HAP-1 (cell line): ENCODE measurements at regions of chr14 and their contacts with region 1.

Region 1: DNA sequence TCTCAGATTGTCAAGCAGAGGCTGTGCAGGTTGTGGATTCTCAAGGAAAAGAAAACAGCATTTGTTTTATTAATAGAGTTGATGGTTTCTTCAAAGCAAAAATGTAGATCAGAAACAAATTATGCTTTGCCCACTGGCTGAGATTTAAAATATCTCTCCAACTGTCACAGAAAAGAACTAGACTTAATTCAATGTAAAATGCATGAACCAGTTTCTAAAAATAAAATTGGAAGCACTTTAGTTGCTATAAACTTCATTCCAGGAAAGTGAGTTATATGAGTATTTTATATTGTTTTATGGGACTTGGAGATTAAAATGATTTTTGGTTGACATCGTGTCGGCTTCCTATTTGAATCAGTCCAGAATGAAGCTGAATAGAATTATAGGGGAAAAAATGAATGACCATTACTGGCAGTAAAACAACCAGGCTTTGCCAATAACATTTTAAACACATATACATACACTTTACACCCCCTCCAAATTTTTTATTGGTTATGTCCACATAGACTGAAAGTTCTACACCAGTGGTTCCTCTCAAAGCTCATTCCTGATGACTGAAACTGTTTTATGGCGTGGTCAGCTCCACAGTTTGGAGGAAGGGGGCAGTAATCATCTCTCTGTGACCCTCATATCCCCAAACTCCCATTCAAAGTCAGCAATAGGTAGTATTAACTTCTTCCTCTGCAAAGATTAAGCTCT is 55.5 kb upstream of the DAAM1 start:
- DNase-seq: no peak
- H3K4me3 ChIP-seq: no peak overlapping the region
- H3K4me1 ChIP-seq: no peaks in the 10 kb centered on the region
- H3K27me3 ChIP-seq: no peaks in the 10 kb centered on the region

Region 2: DNA sequence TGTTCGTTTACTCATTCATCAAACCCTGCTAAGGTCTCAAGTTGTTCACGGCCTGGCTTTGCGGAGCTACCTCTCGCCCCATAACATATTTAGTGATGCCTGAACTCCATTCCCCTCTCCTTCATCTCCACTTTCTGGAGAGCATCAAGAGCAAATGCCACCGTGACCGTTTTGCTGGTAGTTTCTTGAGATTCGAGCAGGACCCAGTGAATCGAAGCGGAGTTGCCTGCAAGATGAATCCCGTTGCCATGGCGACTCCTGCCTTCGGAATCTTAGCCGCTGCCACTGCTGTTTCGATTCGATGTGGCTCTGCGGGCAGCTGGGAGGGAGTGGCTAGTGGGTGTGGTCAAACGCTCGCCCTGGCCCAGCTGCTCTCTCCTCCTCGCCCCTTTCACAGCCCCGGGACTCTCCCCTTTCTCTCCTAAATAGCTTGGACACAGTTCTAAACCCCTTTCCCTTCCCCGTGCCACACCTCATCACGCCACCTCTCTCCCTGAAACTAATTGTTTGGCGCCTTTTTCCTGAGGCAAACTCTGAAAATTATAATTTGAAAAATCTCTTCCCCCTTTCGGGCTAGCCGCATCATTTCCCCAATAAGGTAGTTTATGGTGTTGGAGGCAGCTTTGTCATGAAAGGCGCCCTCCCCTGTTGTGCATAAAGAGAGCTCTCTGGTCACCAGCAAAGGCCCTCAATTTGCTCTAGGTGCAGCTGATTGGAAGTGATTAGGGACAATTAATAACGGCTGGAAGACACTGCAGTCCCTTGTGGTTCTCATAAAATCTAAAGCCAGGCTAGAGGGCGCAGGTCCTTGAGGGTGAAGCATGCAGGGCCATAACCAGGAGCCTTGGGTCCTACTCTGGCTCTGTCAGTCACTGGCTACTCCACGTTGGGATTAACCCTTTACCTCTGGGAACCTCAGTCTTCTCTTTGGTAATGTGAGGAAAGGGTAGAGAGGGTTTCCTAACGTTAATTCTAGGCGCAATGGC is 57.1 kb after region 1 on chr14:
- in situ Hi-C with region 1: loop called (anchors 5 kb)
- DNase-seq: peak; percentile 92 to 96
- H3K4me3 ChIP-seq: peak overlapping the region; percentile 85
- H3K4me1 ChIP-seq: peaks cover 25% of the 10 kb centered on the region
- H3K27me3 ChIP-seq: no peaks in the 10 kb centered on the region